Sciatic nerve (tissue), 2 donors: ENCODE measurements at regions of chr19 and their contacts with region 1.

Region 1: GRCh38 chr19:46990991-46991676 is 28.5 kb upstream of the NPAS1 start:
- DNase-seq: peak; percentile 93
- ATAC-seq: peak; percentile 86

Region 2: DNA sequence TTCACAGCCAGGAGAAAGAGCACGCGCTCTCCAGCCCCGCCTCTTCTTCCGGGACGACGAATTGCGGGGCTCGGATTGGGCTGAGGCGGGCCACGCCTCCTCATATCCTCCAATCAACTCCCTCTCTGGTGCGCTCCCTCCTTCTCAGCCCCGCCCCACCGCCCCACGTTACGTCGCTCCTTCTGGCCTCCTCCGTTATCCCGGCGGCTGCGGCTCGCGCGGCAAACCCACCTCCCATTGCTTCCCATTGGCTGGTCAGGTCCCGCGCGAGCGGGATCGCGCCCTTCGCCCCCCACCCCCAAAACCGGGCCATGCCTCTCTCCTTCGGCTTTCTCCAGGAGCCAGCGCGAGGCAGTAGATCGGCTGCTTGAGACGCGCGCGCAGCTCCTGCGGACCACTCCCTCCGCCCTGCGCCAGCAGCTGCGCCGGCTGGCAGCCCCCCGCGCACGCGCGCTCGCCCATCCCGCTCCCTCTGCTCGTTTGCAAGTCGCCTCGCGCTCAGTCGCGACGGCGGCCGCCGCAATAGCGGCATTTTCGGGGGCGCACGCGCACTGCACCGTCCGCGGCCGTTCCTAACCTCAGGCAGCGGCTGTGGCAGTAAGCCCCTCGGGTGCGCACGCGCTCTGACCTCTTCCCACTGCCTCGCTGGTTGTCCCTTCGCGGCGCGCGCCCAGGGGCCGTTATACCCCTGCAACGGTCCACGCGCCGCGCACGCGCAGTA is 130.8 kb before region 1 on chr19:
- intact Hi-C with region 1: loop called (anchors 5 kb)
- DNase-seq: peak; percentile 98
- ATAC-seq: peak; percentile 92